Common myeloid progenitor, CD34-positive (primary cell): ENCODE measurements at regions of chr3 and their contacts with region 1.

Region 1: DNA sequence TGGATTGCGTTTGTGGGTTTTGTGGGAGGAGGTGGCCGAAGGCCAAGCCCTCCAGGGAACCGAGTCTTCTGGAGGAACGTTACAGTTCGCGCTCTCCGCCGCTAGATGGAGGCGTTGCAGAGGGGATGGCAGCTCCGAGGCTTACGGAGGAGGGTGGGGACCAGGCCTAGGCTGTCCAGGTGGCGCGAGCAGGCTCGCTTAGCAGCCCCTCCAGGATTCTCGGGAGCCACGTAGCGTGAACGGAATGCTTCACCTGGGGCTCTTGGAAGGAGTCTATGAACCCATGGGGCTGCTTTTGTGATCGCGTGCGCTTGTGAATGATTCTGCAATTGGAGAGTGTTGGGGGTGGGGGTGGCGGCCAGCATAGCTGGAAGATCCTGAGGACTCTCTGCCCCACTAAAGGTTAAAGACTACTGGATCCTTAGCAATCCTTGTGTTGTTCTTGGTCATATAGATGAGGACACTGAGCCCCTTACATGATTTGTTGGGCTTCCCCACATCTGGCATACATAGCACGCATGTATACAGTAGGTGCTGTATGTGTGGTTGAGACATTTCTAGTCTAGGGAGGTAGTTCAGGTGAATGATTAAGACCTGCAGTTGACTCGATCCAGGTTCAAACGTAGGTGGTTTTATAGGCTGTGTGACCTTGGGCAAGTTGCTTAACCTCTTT is 25.7 kb downstream of the FAM3D start:
- DNase-seq: peak; percentile 62 to 76 (median 75)
- H3K4me3 ChIP-seq: no peak overlapping the region
- H3K27ac ChIP-seq: no peak overlapping the region
- H3K4me1 ChIP-seq: peaks cover 0 to 4% (median 2%) of the 10 kb centered on the region in 4 experiments
- H3K27me3 ChIP-seq: no peaks in the 10 kb centered on the region

Region 2: GRCh38 chr3:58222094-58222724 is 418.6 kb before region 1 on chr3:
- CTCF ChIA-PET with region 1: no interaction called
- POLR2A ChIA-PET with region 1: no interaction called
- DNase-seq: no peak
- H3K4me3 ChIP-seq: no peak overlapping the region
- H3K27ac ChIP-seq: no peak overlapping the region
- H3K4me1 ChIP-seq: peaks cover 0 to 5% (median 4%) of the 10 kb centered on the region in 4 experiments
- H3K27me3 ChIP-seq: no peaks in the 10 kb centered on the region

Region 3: DNA sequence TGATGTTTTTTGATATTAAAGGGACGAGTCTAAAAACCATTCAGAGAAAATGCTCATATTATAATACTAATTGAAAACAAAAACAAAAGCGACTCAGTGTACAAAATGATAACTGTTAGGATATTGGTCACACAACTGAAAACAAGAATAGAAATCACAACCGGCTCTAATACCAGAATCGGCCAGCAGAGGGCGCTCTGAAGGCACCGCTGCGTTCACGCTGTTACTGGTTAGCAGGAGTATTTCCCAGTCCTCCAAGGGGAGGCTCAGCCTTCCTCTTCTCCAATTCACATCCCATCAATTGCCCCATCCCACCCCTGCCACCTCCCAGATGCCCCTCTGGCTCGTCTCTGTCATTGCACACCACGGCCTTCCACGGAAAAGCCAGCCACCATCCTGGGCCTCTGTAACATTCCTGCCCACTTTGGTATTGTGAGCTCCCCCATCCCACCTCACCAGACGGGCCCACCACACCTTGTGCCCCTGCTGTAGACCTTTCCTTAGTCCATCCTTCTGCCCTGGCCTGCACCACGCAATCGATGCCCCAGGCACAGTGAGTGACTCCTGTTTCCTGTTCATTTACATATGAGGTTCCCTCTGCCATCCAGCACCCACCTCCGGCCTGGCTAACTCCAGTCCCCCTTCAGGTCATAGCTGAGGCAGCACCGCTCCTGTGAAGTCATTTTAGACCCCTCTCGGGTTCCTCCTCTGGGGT is 72.1 kb before region 1 on chr3:
- CTCF ChIA-PET with region 1: interaction called, 239 read pairs
- POLR2A ChIA-PET with region 1: no interaction called
- DNase-seq: peak; percentile 49 to 73 (median 61)
- H3K4me3 ChIP-seq: no peak overlapping the region
- H3K27ac ChIP-seq: no peak overlapping the region
- H3K4me1 ChIP-seq: no peaks in the 10 kb centered on the region
- H3K27me3 ChIP-seq: no peaks in the 10 kb centered on the region

Region 4: GRCh38 chr3:58630076-58630709 is 10.6 kb before region 1 on chr3:
- CTCF ChIA-PET with region 1: interaction called, 45 read pairs
- POLR2A ChIA-PET with region 1: no interaction called
- DNase-seq: peak; percentile 50 to 67 (median 60)
- H3K4me3 ChIP-seq: no peak overlapping the region
- H3K27ac ChIP-seq: no peak overlapping the region
- H3K4me1 ChIP-seq: peaks cover 0 to 5% (median 0%) of the 10 kb centered on the region in 4 experiments
- H3K27me3 ChIP-seq: no peaks in the 10 kb centered on the region

Region 5: GRCh38 chr3:58731673-58732072 is 90.8 kb after region 1 on chr3:
- CTCF ChIA-PET with region 1: interaction called, 23 read pairs
- POLR2A ChIA-PET with region 1: no interaction called
- DNase-seq: peak in 1 of 3 donors; percentile 14
- H3K4me3 ChIP-seq: no peak overlapping the region
- H3K27ac ChIP-seq: no peak overlapping the region
- H3K4me1 ChIP-seq: no peaks in the 10 kb centered on the region
- H3K27me3 ChIP-seq: no peaks in the 10 kb centered on the region

Region 6: GRCh38 chr3:59049671-59050331 is 409.0 kb after region 1 on chr3 and contains the start of gene CFAP20DC:
- CTCF ChIA-PET with region 1: interaction called, 26 read pairs
- POLR2A ChIA-PET with region 1: no interaction called
- DNase-seq: peak; percentile 95 to 97 (median 96)
- H3K4me3 ChIP-seq: peak within 1 kb of the TSS; percentile 42 to 84 (median 65)
- H3K27ac ChIP-seq: peak within 1 kb of the TSS; percentile 55 to 57
- H3K4me1 ChIP-seq: peaks cover 3 to 12% (median 6%) of the 10 kb centered on the region in 4 experiments
- H3K27me3 ChIP-seq: no peaks in the 10 kb centered on the region